GM12878 (cell line): ENCODE measurements at regions of chr6 and their contacts with region 1.

Region 1: DNA sequence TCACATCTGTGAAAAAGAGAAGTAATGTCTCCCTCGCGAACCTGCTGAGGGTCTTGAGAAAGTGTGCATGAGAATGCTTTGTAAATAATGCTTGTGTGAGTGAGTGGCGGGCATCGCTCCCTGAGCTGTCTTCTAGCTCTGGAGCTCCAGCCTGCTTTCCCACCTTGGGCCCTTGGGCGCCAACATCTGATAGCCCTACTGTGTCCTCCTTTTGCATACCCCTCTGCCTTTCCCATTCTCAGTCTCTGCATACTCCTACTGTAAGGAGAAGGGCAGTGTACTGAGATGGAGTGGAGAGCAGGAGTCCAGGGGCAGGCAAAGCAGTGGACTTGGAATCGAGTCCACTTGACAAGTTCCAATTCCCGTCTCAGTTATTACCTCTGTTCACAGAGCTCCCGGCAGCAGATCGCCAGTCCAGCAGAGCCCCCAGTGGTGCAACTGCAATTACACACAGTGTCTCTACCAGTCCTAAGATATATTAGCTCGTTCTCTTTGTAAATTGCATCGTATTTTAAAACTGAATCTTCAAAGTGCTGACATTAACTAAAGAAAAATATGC is 847 bp upstream of the NCR2 start:
- DNase-seq: no peak
- ATAC-seq: peak; percentile 47
- H3K4me3 ChIP-seq: no peak overlapping the region
- H3K27ac ChIP-seq: peak overlapping the region; percentile 72
- H3K4me1 ChIP-seq: peaks cover 34% of the 10 kb centered on the region
- H3K27me3 ChIP-seq: no peaks in the 10 kb centered on the region
- CTCF ChIP-seq: peak; percentile 13 to 32 (median 16); a peak in 4 of 6 replicates
- EP300 ChIP-seq: no peak
- POLR2A ChIP-seq: no peak
- RAD21 ChIP-seq: peak; percentile 30; the same call in 1 of the 2 replicates

Region 2: DNA sequence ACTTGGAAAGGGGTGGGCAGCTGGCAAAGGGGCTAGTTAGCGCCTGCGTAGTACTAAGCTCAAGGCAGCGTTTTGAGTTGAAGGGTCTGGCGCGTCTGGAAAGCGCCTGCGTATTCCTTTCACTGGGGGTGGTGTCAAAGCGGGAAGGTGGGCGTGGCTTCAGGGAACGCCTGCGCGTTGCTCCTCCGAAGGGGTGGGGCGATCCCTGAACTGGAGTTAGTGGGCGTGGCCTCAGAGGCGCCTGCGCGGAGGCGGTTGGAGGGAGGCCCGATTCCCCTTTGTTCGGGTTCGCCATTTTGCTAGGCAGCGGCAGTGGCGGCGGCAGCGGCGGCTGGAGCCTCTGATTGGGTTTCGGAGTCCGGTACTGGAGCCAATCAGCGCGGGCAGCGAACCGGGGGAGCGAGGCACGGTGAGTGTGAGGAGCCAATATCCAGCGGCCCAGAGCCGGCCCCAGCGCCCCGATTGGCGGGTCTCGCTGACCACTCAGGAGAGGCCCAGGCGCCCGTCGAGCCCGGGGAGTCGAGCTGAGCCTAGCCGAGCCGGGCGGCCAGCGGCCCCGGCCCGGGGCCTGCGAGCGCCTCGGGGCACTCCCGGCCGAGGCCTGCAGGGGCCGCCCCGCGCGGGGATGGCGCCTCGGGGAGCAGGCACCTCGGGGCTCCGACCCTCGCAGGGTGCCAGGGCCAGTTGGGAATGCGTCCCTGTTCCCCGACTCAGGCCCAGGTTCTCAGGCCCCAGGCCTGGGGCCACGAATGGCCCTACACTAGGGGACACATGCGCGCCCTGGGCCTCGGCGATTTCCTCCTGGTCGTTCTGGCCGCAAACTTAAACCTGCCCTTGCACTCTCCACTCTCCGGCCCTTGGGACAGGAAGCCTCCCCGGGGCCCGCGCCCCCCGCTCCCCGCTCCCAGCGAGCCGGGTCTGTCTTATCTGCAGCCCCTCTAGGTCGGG is 261.6 kb before region 1 on chr6 and contains the start of gene NFYA:
- CTCF ChIA-PET with region 1: interaction called, 5 read pairs
- POLR2A ChIA-PET with region 1: interaction called, 4 read pairs
- RAD21 ChIA-PET with region 1: interaction called, 7 read pairs
- SMC1A ChIA-PET with region 1: interaction called, 15 read pairs
- in situ Hi-C with region 1: no loop called
- intact Hi-C with region 1: no loop called
- DNase-seq: no peak
- ATAC-seq: peak; percentile 85
- H3K4me3 ChIP-seq: peak within 1 kb of the TSS; percentile 88
- H3K27ac ChIP-seq: peak within 1 kb of the TSS; percentile 99
- H3K4me1 ChIP-seq: peaks cover 7% of the 10 kb centered on the region; the same call in 1 of the 2 replicates
- H3K27me3 ChIP-seq: no peaks in the 10 kb centered on the region
- CTCF ChIP-seq: peak in 2 of 3 experiments; percentile 32 to 34; a peak in 4 of 6 replicates
- EP300 ChIP-seq: no peak
- POLR2A ChIP-seq: peak; percentile 33
- RAD21 ChIP-seq: no peak
- polyA plus RNA-seq, gene NFYA: 6.4 to 7.3 TPM

Region 3: DNA sequence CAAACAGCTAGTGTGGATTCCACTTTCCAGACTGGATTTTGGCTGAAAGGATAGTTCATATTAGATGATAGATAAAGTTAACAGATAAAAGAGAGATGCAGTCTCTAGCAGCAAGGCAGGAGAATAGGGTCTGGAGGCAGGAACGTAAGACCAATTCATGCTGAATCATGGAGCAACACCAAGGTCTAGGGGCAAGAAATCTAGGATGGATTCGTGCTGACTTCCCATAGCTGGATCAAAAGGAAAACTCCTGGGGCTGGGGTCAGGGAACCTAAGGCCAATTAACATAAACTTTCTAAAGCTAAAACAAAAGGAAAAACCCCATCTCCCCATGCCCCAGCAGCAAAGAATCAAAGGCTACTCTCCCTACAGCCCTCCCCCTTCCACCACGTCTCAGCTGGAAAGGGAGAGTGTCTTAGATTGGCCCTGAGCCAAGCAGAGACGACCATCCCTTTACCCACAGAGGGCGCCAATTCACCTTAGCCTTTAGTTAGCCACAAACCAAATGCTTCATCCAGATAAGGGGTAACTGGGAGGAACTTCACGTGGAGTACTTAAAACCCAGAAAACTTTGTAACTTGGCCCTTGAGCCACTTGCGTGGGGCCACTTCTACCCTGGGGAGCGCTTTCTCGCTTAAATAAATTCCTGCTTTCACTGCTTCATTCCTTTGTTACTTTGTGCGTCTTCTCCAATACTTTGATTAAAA is 55.7 kb before region 1 on chr6:
- CTCF ChIA-PET with region 1: interaction called, 15 read pairs
- POLR2A ChIA-PET with region 1: no interaction called
- RAD21 ChIA-PET with region 1: interaction called, 11 read pairs
- SMC1A ChIA-PET with region 1: interaction called, 15 read pairs
- in situ Hi-C with region 1: no loop called
- intact Hi-C with region 1: no loop called
- DNase-seq: no peak
- ATAC-seq: peak; percentile 78
- H3K4me3 ChIP-seq: no peak overlapping the region
- H3K27ac ChIP-seq: no peak overlapping the region
- H3K4me1 ChIP-seq: no peaks in the 10 kb centered on the region
- H3K27me3 ChIP-seq: no peaks in the 10 kb centered on the region
- CTCF ChIP-seq: peak; percentile 58 to 65 (median 65)
- EP300 ChIP-seq: no peak
- POLR2A ChIP-seq: no peak
- RAD21 ChIP-seq: peak; percentile 79

Region 4: DNA sequence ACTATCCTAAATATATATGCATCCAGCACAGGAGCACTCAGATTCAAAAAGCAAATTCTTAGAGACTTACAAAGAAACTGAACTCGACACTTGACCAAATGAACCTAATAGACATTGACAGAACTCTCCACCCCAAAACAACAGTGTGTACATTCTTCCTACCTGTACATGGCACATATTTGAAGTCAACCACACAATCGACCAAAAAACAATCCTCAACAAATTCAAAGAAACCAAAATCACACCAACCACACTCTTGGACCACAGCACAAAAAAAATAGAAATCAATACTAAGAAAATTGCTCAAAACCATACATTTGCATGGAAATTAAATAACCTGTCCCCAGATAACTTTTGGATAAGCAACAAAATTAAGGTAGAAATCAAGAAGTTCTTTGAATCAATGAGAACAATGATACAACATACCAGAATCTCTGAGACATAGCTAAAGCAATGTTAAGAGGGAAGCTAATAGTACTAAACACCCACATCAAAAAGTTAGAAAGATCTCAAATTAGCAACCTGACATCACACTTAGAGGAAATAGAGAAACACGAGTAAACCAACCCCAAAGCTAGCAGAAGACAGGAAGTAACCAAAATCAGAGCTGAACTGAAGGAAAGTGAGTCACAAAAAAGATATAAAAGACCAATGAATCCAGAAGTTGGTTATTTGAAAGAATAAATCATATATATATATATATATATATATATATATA is 35.6 kb before region 1 on chr6:
- CTCF ChIA-PET with region 1: interaction called, 113 read pairs
- POLR2A ChIA-PET with region 1: interaction called, 5 read pairs
- RAD21 ChIA-PET with region 1: interaction called, 16 read pairs
- SMC1A ChIA-PET with region 1: interaction called, 13 read pairs
- in situ Hi-C with region 1: no loop called
- intact Hi-C with region 1: no loop called
- DNase-seq: no peak
- ATAC-seq: peak; percentile 42; the same call in 2 of the 3 replicates
- H3K4me3 ChIP-seq: no peak overlapping the region
- H3K27ac ChIP-seq: no peak overlapping the region
- H3K4me1 ChIP-seq: peaks cover 7% of the 10 kb centered on the region
- H3K27me3 ChIP-seq: no peaks in the 10 kb centered on the region
- CTCF ChIP-seq: no peak
- EP300 ChIP-seq: no peak
- POLR2A ChIP-seq: no peak
- RAD21 ChIP-seq: no peak

Region 5: GRCh38 chr6:41318654-41319565 is 15.7 kb before region 1 on chr6:
- CTCF ChIA-PET with region 1: interaction called, 206 read pairs
- POLR2A ChIA-PET with region 1: interaction called, 63 read pairs
- RAD21 ChIA-PET with region 1: interaction called, 230 read pairs
- SMC1A ChIA-PET with region 1: interaction called, 253 read pairs
- in situ Hi-C with region 1: no loop called
- intact Hi-C with region 1: no loop called
- DNase-seq: peak; percentile 62
- ATAC-seq: peak; percentile 98
- H3K4me3 ChIP-seq: no peak overlapping the region
- H3K27ac ChIP-seq: no peak overlapping the region
- H3K4me1 ChIP-seq: peaks cover 7% of the 10 kb centered on the region; the same call in 1 of the 2 replicates
- H3K27me3 ChIP-seq: 0 out of 4 replicates have a peak, but pooled peaks cover 0 to 2% of the 10 kb centered on the region in 2 experiments
- CTCF ChIP-seq: peak; percentile 90 to 100 (median 100)
- EP300 ChIP-seq: no peak
- POLR2A ChIP-seq: no peak
- RAD21 ChIP-seq: peak; percentile 94

Region 6: DNA sequence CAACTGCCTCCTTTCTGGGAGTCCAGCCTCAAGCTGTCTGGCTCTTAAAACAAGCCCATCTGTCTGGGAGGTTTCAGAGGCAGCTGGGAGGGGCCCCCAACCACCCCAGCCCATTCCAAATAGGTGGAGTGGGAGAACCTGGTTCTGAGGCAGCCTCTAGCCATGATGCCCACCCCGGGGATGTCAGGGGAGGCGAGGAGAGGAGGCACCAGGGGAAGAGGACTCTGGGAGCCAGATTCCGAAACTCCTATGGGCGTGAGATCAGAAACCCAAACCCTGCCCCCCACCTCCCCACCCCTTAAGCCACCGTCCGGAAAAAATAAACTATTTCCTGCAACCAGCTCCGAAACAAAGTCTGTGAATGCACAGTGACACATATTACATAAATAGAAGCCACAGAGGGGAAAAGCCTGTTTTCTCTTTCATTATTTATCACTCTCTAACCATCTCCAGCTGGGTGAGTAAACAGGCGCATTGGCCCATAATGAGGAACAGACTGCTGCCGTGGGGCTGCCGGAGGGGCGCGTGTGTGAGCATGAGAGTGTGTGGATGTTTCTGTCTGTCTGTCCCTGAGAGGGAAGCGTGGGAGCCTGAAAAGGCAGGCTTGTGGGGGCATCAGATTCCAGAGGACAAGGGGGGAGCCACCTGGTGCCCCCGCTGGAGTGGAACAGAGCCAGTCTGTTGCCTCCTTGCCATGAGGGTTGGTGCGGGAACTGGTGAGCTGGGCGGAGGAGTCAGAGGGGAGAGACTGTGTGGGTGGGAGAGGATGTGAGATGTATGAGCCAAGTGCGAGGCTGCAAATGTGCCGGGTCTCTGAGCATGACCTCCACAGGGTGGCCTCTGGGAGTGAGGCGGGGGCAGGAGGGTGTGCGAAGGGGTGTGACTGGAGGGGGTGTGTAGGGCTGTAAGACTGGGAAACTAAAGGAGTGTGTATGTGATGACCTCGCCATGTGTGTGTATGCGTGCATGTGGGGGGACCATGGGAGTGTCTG is 197.3 kb after region 1 on chr6:
- CTCF ChIA-PET with region 1: interaction called, 3 read pairs
- POLR2A ChIA-PET with region 1: interaction called, 6 read pairs
- RAD21 ChIA-PET with region 1: interaction called, 10 read pairs
- SMC1A ChIA-PET with region 1: interaction called, 9 read pairs
- in situ Hi-C with region 1: no loop called
- intact Hi-C with region 1: no loop called
- DNase-seq: peak; percentile 92
- ATAC-seq: peak; percentile 90
- H3K4me3 ChIP-seq: peak overlapping the region; percentile 33; the same call in 1 of the 2 replicates
- H3K27ac ChIP-seq: peak overlapping the region; percentile 93
- H3K4me1 ChIP-seq: peaks cover 34% of the 10 kb centered on the region
- H3K27me3 ChIP-seq: 0 out of 4 replicates have a peak, but pooled peaks cover 0 to 2% of the 10 kb centered on the region in 2 experiments
- CTCF ChIP-seq: peak in 1 of 3 experiments; percentile 15; a peak in 1 of 6 replicates
- EP300 ChIP-seq: peak; percentile 95 to 96
- POLR2A ChIP-seq: peak; percentile 83
- RAD21 ChIP-seq: peak; percentile 28

Region 7: GRCh38 chr6:41723530-41724227 is 389.1 kb after region 1 on chr6:
- CTCF ChIA-PET with region 1: interaction called, 3 read pairs
- POLR2A ChIA-PET with region 1: interaction called, 16 read pairs
- RAD21 ChIA-PET with region 1: interaction called, 9 read pairs
- SMC1A ChIA-PET with region 1: interaction called, 7 read pairs
- in situ Hi-C with region 1: no loop called
- intact Hi-C with region 1: no loop called
- DNase-seq: no peak
- ATAC-seq: peak; percentile 82
- H3K4me3 ChIP-seq: peak overlapping the region; percentile 81
- H3K27ac ChIP-seq: peak overlapping the region; percentile 97
- H3K4me1 ChIP-seq: peaks cover 75% of the 10 kb centered on the region
- H3K27me3 ChIP-seq: no peaks in the 10 kb centered on the region
- CTCF ChIP-seq: no peak
- EP300 ChIP-seq: peak; percentile 41 to 60; a peak in 2 of 4 replicates
- POLR2A ChIP-seq: peak; percentile 90
- RAD21 ChIP-seq: no peak; the same call in 1 of the 2 replicates

Region 8: GRCh38 chr6:42782622-42783176 is 1448.1 kb after region 1 on chr6:
- CTCF ChIA-PET with region 1: no interaction called
- POLR2A ChIA-PET with region 1: no interaction called
- RAD21 ChIA-PET with region 1: no interaction called
- SMC1A ChIA-PET with region 1: no interaction called
- in situ Hi-C with region 1: no loop called
- intact Hi-C with region 1: no loop called
- DNase-seq: no peak
- ATAC-seq: peak; percentile 41
- H3K4me3 ChIP-seq: peak overlapping the region; percentile 86
- H3K27ac ChIP-seq: peak overlapping the region; percentile 99
- H3K4me1 ChIP-seq: peaks cover 31% of the 10 kb centered on the region
- H3K27me3 ChIP-seq: no peaks in the 10 kb centered on the region
- CTCF ChIP-seq: no peak
- EP300 ChIP-seq: no peak
- POLR2A ChIP-seq: no peak
- RAD21 ChIP-seq: no peak